Psoas muscle (tissue), 8 donors: ENCODE measurements at regions of chr5 and their contacts with region 1.

Region 1: DNA sequence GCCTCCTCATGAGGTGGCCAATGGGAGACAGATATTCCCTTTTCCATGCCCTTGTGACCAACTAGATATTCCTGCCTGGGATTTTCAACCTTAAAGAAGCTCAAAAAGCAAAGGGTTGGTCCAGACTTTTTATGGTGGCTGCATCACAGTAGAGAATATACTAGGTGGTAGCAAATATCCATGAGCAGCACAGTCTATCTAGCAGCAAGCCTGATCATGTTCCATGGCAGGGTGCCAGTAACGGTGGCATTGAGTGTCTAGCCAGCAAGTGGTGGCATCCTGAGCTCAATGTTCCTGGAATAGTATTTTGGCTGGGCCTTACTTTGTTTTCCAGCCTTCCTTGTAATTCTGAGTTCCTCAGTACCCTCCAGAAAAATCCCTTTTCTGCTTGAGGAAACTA is 25.8 kb downstream of the CDC25C start:
- DNase-seq: peak; percentile 72 to 91
- ATAC-seq: peak; percentile 95 to 99 (median 98)
- H3K4me3 ChIP-seq: no peak overlapping the region
- H3K27ac ChIP-seq: peak overlapping the region; percentile 81
- H3K4me1 ChIP-seq: peaks cover 16% of the 10 kb centered on the region
- H3K27me3 ChIP-seq: no peaks in the 10 kb centered on the region
- CTCF ChIP-seq: peak; percentile 23

Region 2: DNA sequence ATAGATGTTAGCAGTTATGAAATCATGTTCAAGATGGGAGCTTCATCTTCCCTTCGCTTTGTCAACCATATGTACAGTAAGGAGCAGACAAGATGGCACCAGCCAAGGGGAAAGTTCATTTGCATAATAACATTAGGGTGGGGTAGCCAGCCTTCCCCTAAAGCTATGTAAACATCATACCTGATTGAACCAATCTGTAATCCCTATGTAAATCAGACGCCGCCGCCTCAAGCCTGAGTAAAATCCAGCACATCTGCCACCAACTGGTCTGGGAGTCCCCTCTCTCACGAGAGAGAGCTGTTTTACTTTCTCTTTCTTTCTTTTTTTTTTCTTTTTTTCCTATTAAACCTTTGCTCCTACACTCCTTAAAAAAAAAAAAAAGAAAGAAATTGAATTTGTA is 102.2 kb after region 1 on chr5:
- intact Hi-C with region 1: loop called (anchors 5 kb)
- DNase-seq: no peak
- ATAC-seq: no peak
- H3K4me3 ChIP-seq: no peak overlapping the region
- H3K27ac ChIP-seq: no peak overlapping the region
- H3K4me1 ChIP-seq: no peaks in the 10 kb centered on the region
- H3K27me3 ChIP-seq: no peaks in the 10 kb centered on the region
- CTCF ChIP-seq: no peak